GM12878 (cell line): ENCODE measurements at regions of chr5 and their contacts with region 1.

Region 1: GRCh38 chr5:163459922-163460766 is at the starts of genes HMMR and NUDCD2:
- DNase-seq: peak; percentile 96
- ATAC-seq: peak; percentile 87
- H3K4me3 ChIP-seq: peak within 1 kb of the TSS; percentile 91
- H3K27ac ChIP-seq: peak within 1 kb of the TSS; percentile 99
- H3K4me1 ChIP-seq: no peaks in the 10 kb centered on the region; the same call in 1 of the 2 replicates
- H3K27me3 ChIP-seq: no peaks in the 10 kb centered on the region
- CTCF ChIP-seq: no peak
- EP300 ChIP-seq: 0 out of 4 replicates have a peak, but pooled peaks of 1 of the 2 experiments have one; percentile 38
- POLR2A ChIP-seq: peak; percentile 99
- RAD21 ChIP-seq: no peak
- polyA plus RNA-seq, gene HMMR: 58.1 to 64.4 TPM
- polyA plus RNA-seq, gene NUDCD2: 9.1 to 18.1 TPM

Region 2: GRCh38 chr5:163437309-163438182 is 22.6 kb before region 1 on chr5 and contains the start of gene CCNG1:
- CTCF ChIA-PET with region 1: interaction called, 74 read pairs
- POLR2A ChIA-PET with region 1: interaction called, 181 read pairs
- RAD21 ChIA-PET with region 1: interaction called, 78 read pairs
- SMC1A ChIA-PET with region 1: interaction called, 142 read pairs
- in situ Hi-C with region 1: no loop called
- intact Hi-C with region 1: loop called (anchors 1 kb)
- DNase-seq: peak; percentile 88
- ATAC-seq: peak; percentile 95
- H3K4me3 ChIP-seq: peak within 1 kb of the TSS; percentile 93
- H3K27ac ChIP-seq: peak within 1 kb of the TSS; percentile 86
- H3K4me1 ChIP-seq: no peaks in the 10 kb centered on the region; the same call in 1 of the 2 replicates
- H3K27me3 ChIP-seq: no peaks in the 10 kb centered on the region
- CTCF ChIP-seq: no peak
- EP300 ChIP-seq: no peak
- POLR2A ChIP-seq: peak; percentile 100
- RAD21 ChIP-seq: no peak
- polyA plus RNA-seq, gene CCNG1: 200 to 274 TPM

Region 3: DNA sequence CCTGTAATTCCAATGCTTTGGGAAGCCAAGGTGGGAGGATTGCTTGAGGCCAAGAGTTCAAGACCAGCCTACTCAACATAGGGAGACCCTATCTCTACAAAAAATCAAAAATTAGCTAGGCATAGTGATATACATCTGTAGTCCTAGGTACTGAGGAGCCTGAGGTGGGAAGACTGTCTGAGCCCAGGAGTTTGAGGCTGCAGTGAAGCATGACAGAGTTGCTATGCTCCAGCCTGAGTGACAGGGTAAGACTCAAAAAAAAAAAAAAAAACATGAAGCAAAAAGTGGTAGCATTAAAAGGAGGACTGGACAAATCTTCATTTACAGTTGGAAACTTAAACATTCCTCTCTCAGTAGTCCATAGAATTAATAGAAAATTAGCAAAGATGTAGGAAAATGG is 13.0 kb before region 1 on chr5:
- CTCF ChIA-PET with region 1: interaction called, 74 read pairs
- POLR2A ChIA-PET with region 1: interaction called, 181 read pairs
- RAD21 ChIA-PET with region 1: interaction called, 78 read pairs
- SMC1A ChIA-PET with region 1: interaction called, 142 read pairs
- in situ Hi-C with region 1: no loop called
- intact Hi-C with region 1: no loop called
- DNase-seq: no peak
- ATAC-seq: no peak
- H3K4me3 ChIP-seq: no peak overlapping the region
- H3K27ac ChIP-seq: no peak overlapping the region
- H3K4me1 ChIP-seq: no peaks in the 10 kb centered on the region
- H3K27me3 ChIP-seq: no peaks in the 10 kb centered on the region
- CTCF ChIP-seq: no peak
- EP300 ChIP-seq: no peak
- POLR2A ChIP-seq: no peak
- RAD21 ChIP-seq: no peak

Region 4: GRCh38 chr5:163473635-163474243 is 13.6 kb after region 1 on chr5:
- CTCF ChIA-PET with region 1: interaction called, 11 read pairs
- POLR2A ChIA-PET with region 1: interaction called, 17 read pairs
- RAD21 ChIA-PET with region 1: interaction called, 5 read pairs
- SMC1A ChIA-PET with region 1: interaction called, 17 read pairs
- in situ Hi-C with region 1: no loop called
- intact Hi-C with region 1: no loop called
- DNase-seq: no peak
- ATAC-seq: peak; percentile 88
- H3K4me3 ChIP-seq: no peak overlapping the region
- H3K27ac ChIP-seq: no peak overlapping the region
- H3K4me1 ChIP-seq: no peaks in the 10 kb centered on the region
- H3K27me3 ChIP-seq: no peaks in the 10 kb centered on the region
- CTCF ChIP-seq: peak in 2 of 3 experiments; percentile 22 to 38; a peak in 3 of 6 replicates
- EP300 ChIP-seq: no peak
- POLR2A ChIP-seq: no peak
- RAD21 ChIP-seq: peak; percentile 27; the same call in 1 of the 2 replicates

Region 5: DNA sequence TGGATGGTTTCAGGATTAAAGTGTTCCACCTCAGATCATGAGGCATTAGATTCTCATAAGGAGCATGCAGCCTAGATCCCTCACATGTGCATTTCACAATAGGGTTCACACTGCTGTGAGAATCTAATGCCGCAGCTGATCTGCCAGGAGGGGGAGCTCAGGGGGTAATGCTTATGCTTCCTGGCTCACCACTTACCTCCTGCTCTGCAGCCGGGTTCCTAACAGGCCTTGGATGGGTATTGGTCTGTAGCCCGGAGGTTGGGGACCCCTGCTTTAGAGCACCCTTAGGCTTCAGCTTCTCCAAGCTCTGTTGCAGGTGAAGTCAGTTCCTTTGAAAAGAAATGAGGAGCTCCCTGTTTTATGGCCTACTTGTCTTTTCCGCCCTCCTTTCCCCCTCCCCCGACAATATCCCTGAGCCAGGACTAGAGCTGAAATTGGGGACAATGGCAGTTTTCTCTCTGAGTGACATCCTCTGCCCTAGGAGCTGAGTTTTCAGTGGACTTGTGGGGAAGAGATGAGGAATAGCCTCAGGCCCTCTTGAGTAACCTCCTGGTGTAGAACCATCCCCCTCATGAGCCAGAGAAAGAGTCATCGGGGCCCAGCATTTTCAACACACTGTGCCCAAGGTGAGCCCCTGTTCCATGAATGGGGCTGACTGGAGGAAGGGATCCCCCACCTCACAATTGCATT is 29.1 kb after region 1 on chr5:
- CTCF ChIA-PET with region 1: no interaction called
- POLR2A ChIA-PET with region 1: interaction called, 10 read pairs
- RAD21 ChIA-PET with region 1: no interaction called
- SMC1A ChIA-PET with region 1: interaction called, 3 read pairs
- in situ Hi-C with region 1: no loop called
- intact Hi-C with region 1: no loop called
- DNase-seq: no peak
- ATAC-seq: peak; percentile 41; the same call in 2 of the 3 replicates
- H3K4me3 ChIP-seq: no peak overlapping the region
- H3K27ac ChIP-seq: no peak overlapping the region
- H3K4me1 ChIP-seq: no peaks in the 10 kb centered on the region
- H3K27me3 ChIP-seq: no peaks in the 10 kb centered on the region
- CTCF ChIP-seq: peak; percentile 7 to 21 (median 15); a peak in 2 of 6 replicates
- EP300 ChIP-seq: no peak
- POLR2A ChIP-seq: no peak
- RAD21 ChIP-seq: no peak

Region 6: DNA sequence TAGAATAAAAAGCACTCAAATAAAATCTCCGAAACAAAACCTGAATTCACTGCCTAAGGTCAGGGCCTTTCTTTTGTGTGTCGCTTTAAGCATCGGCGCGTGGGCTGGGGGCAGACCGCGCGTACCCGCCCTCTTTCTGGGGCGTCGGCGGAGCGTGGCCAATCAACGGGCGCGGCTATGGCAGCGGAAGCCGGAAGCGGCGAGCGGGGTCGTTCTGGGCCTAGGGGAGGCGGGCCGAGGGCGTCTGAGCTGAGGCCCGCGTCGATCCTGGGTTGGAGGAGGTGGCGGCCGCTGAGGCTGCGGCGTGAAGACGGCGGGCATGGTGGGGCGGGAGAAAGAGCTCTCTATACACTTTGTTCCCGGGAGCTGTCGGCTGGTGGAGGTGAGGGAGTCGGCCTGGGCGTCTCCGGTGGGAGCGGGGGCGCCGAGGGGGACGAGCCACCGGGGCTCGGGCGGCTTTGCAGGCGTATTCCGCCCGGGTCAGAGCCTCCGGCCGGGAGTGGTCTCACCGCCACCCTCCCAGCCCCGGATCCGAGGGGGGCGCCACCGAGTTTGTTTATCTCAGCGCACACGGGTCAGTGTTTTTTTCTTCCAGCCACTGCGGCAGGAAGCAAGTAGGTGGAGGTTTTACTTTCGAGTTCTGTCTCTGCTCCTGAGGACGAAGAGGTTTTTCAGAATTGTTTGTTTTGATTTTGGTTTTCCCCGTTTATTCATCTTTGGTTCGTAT is 45.4 kb after region 1 on chr5 and contains the start of gene MAT2B:
- CTCF ChIA-PET with region 1: interaction called, 9 read pairs
- POLR2A ChIA-PET with region 1: interaction called, 61 read pairs
- RAD21 ChIA-PET with region 1: interaction called, 22 read pairs
- SMC1A ChIA-PET with region 1: interaction called, 14 read pairs
- in situ Hi-C with region 1: no loop called
- intact Hi-C with region 1: loop called (anchors 1 kb)
- DNase-seq: peak; percentile 74
- ATAC-seq: peak; percentile 92
- H3K4me3 ChIP-seq: peak within 1 kb of the TSS; percentile 84
- H3K27ac ChIP-seq: peak within 1 kb of the TSS; percentile 43
- H3K4me1 ChIP-seq: peaks cover 3% of the 10 kb centered on the region; the same call in 1 of the 2 replicates
- H3K27me3 ChIP-seq: no peaks in the 10 kb centered on the region
- CTCF ChIP-seq: peak; percentile 55 to 61 (median 57)
- EP300 ChIP-seq: peak; percentile 39 to 52; a peak in 2 of 4 replicates
- POLR2A ChIP-seq: peak; percentile 98
- RAD21 ChIP-seq: no peak
- polyA plus RNA-seq, gene MAT2B: 65.5 to 77.7 TPM